ENCODE measurements at regions of chr19 and their contacts with region 1.

Region 1: GRCh38 chr19:48999481-49000325 is 6.0 kb downstream of the RUVBL2 start:
- DNase-seq: peak; percentile 82
- H3K4me3 Mint-ChIP-seq: no peak overlapping the region
- H3K27ac Mint-ChIP-seq: peak overlapping the region; percentile 25
- H3K4me1 Mint-ChIP-seq: peaks cover 26% of the 10 kb centered on the region
- H3K27me3 Mint-ChIP-seq: no peaks in the 10 kb centered on the region

Region 2: DNA sequence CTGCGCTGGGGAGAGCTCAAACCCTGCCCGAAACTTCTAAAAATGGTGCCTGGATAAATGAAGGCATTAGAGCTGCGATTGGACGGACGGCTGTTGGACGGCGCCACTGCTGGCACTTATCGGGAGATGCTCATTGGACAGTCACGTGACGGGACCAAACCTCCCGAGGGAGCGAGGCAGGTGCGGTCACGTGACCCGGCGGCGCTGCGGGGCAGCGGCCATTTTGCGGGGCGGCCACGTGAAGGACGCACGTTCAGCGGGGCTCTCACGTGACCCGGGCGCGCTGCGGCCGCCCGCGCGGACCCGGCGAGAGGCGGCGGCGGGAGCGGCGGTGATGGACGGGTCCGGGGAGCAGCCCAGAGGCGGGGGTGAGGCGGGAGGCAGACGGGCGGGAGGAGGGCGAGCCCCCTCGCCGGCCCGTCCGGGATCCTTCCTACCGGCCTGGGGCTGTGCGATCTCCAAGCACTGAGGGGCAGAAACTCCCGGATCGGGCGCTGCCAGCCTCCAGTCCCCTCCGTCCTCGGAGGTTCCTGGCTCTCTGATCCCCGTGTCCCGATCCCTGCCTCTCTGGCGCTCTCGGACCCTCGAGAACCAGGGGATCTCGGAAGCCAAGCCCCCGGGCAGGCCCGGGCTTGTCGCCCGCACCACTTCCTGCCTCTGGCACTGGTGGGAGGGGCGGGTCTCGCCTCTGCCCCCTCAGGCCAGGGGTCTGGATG is 45.0 kb before region 1 on chr19 and contains the start of gene BAX:
- CTCF ChIA-PET with region 1: no interaction called
- DNase-seq: peak; percentile 96
- H3K4me3 Mint-ChIP-seq: peak within 1 kb of the TSS; percentile 79
- H3K27ac Mint-ChIP-seq: peak within 1 kb of the TSS; percentile 91
- H3K4me1 Mint-ChIP-seq: peaks cover 48% of the 10 kb centered on the region
- H3K27me3 Mint-ChIP-seq: peaks cover 8% of the 10 kb centered on the region

Region 3: GRCh38 chr19:49014123-49014869 is 14.6 kb after region 1 on chr19:
- CTCF ChIA-PET with region 1: interaction called, 27 read pairs
- DNase-seq: no peak
- H3K4me3 Mint-ChIP-seq: no peak overlapping the region
- H3K27ac Mint-ChIP-seq: no peak overlapping the region
- H3K4me1 Mint-ChIP-seq: peaks cover 19% of the 10 kb centered on the region
- H3K27me3 Mint-ChIP-seq: peaks cover 16% of the 10 kb centered on the region

Region 4: GRCh38 chr19:49210108-49210900 is 210.6 kb after region 1 on chr19:
- CTCF ChIA-PET with region 1: interaction called, 10 read pairs
- DNase-seq: peak; percentile 48
- H3K4me3 Mint-ChIP-seq: no peak overlapping the region
- H3K27ac Mint-ChIP-seq: no peak overlapping the region
- H3K4me1 Mint-ChIP-seq: peaks cover 3% of the 10 kb centered on the region
- H3K27me3 Mint-ChIP-seq: peaks cover 3% of the 10 kb centered on the region